Right ventricle myocardium inferior (tissue), 1 donor: ENCODE measurements at regions of chr1 and their contacts with region 1.

Region 1: GRCh38 chr1:222455188-222455879 is 92.6 kb downstream of the HHIPL2 start:
- DNase-seq: peak; percentile 87
- ATAC-seq: peak; percentile 95

Region 2: DNA sequence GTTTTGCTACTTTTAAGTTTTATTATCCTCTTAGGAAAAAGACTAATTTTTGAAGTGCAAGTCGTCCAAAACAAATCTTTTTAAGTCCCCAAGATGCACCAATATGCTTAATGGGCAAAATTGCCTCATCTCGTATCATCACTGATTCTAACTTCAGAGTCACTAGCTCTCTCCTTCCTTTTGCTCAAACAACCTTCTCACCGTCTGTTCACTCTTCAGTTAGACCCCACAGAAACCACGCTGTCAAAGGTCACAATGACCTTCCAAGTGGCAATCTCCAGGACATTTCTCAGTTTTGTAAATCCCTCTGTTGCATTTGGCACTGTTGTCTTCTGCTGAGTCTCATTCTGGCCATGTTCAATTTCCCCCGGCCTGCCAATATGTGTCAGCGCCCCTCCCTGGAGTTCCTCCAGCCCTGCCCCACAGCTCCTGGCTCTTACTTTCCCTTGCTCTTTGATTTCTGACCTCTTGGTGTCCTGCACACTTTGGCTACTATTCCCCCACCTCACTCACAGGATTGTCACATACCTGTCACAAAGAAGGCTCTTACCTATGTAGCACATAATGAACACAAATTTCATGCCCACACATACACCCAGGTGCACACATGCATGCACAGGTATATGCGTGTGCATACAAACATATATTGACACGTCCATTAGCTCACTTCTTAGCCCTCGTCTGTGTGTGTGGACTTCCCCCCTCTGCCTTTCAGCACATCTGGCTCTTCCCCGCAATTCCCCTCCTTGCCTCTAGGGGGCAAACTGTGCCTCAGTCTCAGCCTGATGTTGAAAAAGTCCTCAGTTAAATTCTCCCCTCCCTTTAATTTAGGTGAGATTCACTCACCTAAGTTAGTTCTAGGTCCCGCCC is 359.5 kb before region 1 on chr1:
- intact Hi-C with region 1: loop called (anchors 2 kb)
- DNase-seq: no peak
- ATAC-seq: no peak

Region 3: GRCh38 chr1:222627232-222627631 is 171.9 kb after region 1 on chr1:
- intact Hi-C with region 1: no loop called
- DNase-seq: no peak
- ATAC-seq: peak; percentile 86

Region 4: DNA sequence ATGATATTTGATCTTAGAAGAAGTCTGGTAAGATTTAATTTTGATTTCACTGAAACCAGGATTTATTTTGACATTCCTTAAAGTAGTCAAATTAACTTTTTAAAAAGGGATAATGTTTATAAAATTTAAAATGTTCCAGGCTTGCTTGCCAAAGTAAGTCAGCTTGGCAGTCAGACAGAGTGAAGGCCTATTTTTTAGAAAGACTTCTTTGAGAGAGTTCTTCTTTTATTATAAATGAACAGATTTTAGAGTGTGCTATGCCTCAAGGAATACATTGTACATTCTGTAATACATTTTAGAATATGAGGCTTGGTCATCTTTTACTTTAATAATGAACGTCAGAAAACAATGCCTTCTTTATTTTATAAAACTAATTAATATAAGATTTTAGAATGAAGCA is 498.3 kb after region 1 on chr1:
- intact Hi-C with region 1: no loop called
- DNase-seq: no peak
- ATAC-seq: no peak